GM10248 (cell line): ENCODE measurements at regions of chr16 and their contacts with region 1.

Region 1: GRCh38 chr16:82045465-82045864 is 10.4 kb downstream of the HSD17B2 start:
- DNase-seq: no peak
- CTCF ChIP-seq: no peak

Region 2: DNA sequence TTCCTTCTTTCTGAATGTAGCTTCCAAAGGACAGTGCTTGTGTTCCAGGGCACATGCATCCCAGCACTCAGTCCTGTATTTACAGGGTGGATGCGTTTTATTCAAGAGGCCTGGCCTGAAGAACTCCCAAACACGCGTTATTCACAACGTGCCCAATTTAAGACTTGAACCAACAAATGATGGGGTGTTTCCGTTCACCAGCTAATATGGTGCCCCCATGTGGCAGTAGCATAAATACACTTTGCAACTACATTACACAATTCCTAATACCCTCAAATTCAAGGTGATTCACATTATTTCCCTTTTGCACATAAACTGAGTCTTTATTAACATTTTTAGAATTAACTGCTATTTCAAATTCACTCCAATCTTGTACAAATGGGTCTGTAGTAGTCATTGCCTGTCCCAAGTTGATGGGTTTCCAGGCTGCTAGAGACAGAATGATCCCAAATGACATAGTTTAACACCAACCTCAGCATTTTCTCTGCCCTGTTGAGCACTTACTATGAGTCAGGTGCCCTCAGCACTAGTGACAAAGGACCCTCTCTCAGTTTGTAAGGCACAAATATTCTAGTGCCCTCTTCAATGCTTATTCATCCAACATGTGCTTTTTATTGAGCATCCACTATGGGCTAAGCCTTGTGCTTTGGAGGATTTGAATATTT is 16.5 kb after region 1 on chr16:
- CTCF ChIA-PET with region 1: interaction called, 11 read pairs
- POLR2A ChIA-PET with region 1: no interaction called
- DNase-seq: peak; percentile 36
- CTCF ChIP-seq: peak; percentile 49

Region 3: GRCh38 chr16:82094942-82095540 is 49.6 kb after region 1 on chr16:
- CTCF ChIA-PET with region 1: no interaction called
- POLR2A ChIA-PET with region 1: no interaction called
- DNase-seq: no peak
- CTCF ChIP-seq: no peak